Heart right ventricle (tissue), 16 donors: ENCODE measurements at regions of chr5 and their contacts with region 1.

Region 1: GRCh38 chr5:37043688-37044087 is 167.1 kb downstream of the NIPBL start:
- DNase-seq: no peak
- ATAC-seq: no peak
- H3K4me3 ChIP-seq: no peak overlapping the region
- H3K27ac ChIP-seq: no peak overlapping the region
- H3K4me1 ChIP-seq: no peaks in the 10 kb centered on the region
- H3K27me3 ChIP-seq: no peaks in the 10 kb centered on the region
- CTCF ChIP-seq: no peak

Region 2: GRCh38 chr5:37319037-37319782 is 275.5 kb after region 1 on chr5:
- intact Hi-C with region 1: loop called in 1 of 10 experiments (anchors 10 kb)
- DNase-seq: no peak
- ATAC-seq: no peak
- H3K4me3 ChIP-seq: no peak overlapping the region
- H3K27ac ChIP-seq: no peak overlapping the region
- H3K4me1 ChIP-seq: peaks cover 0 to 9% (median 0%) of the 10 kb centered on the region in 9 donors
- H3K27me3 ChIP-seq: no peaks in the 10 kb centered on the region
- CTCF ChIP-seq: no peak